Naive thymus-derived CD4-positive, alpha-beta T cell (primary cell): ENCODE measurements at regions of chr4 and their contacts with region 1.

Region 1: GRCh38 chr4:104704881-104705280 is 210.2 kb upstream of the CXXC4 start:
- DNase-seq: no peak
- ATAC-seq: no peak
- H3K4me3 ChIP-seq: no peak overlapping the region
- H3K4me3 Mint-ChIP-seq: no peak overlapping the region
- H3K27ac ChIP-seq: no peak overlapping the region
- H3K27ac Mint-ChIP-seq: no peak overlapping the region
- H3K4me1 ChIP-seq: no peaks in the 10 kb centered on the region
- H3K4me1 Mint-ChIP-seq: no peaks in the 10 kb centered on the region
- H3K27me3 ChIP-seq: no peaks in the 10 kb centered on the region
- H3K27me3 Mint-ChIP-seq: peaks cover 0 to 7% (median 0%) of the 10 kb centered on the region in 5 donors

Region 2: GRCh38 chr4:104763554-104764222 is 58.8 kb after region 1 on chr4:
- CTCF ChIA-PET with region 1: no interaction called
- POLR2A ChIA-PET with region 1: no interaction called
- intact Hi-C with region 1: loop called in 1 of 2 experiments (anchors 10 kb)
- DNase-seq: no peak
- ATAC-seq: no peak
- H3K4me3 ChIP-seq: no peak overlapping the region
- H3K4me3 Mint-ChIP-seq: no peak overlapping the region
- H3K27ac ChIP-seq: no peak overlapping the region
- H3K27ac Mint-ChIP-seq: no peak overlapping the region
- H3K4me1 ChIP-seq: no peaks in the 10 kb centered on the region
- H3K4me1 Mint-ChIP-seq: peaks cover 0 to 4% (median 0%) of the 10 kb centered on the region in 7 donors
- H3K27me3 ChIP-seq: no peaks in the 10 kb centered on the region
- H3K27me3 Mint-ChIP-seq: peaks cover 0 to 9% (median 0%) of the 10 kb centered on the region in 5 donors